Left ventricle myocardium superior (tissue), 1 donor: ENCODE measurements at regions of chr3 and their contacts with region 1.

Region 1: DNA sequence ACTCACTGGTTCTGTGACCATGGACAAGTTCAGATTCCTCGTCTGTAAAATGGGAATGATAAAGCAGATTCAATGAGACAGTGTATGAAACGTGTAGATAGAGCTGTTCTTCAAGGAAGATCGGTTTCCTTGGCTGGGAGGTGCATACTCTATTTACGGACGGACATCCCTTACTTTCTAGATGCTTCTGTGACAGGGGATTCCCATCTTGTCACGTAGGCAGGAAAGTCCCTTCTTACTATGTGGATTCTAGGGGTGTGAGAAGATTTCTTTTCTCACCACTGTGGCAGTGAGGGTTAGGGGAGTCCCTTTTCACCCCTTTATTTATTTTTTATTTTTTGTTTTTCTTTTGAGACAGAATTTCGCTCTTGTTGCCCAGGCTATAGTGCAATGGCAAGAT is 180.9 kb upstream of the TBL1XR1 start:
- DNase-seq: no peak
- ATAC-seq: no peak

Region 2: GRCh38 chr3:177201706-177202397 is 176.3 kb before region 1 on chr3:
- intact Hi-C with region 1: no loop called
- DNase-seq: no peak
- ATAC-seq: no peak

Region 3: GRCh38 chr3:178325330-178325729 is 947.2 kb after region 1 on chr3:
- intact Hi-C with region 1: loop called (anchors 10 kb)
- DNase-seq: no peak
- ATAC-seq: no peak